ENCODE measurements at regions of chr11 and their contacts with region 1.

Region 1: GRCh38 chr11:131408025-131408640 is 37.7 kb downstream of the NTM start:
- DNase-seq: peak in 1 of 2 donors; percentile 50
- H3K4me3 ChIP-seq: no peak overlapping the region
- CTCF ChIP-seq: no peak
- POLR2A ChIP-seq: no peak

Region 2: DNA sequence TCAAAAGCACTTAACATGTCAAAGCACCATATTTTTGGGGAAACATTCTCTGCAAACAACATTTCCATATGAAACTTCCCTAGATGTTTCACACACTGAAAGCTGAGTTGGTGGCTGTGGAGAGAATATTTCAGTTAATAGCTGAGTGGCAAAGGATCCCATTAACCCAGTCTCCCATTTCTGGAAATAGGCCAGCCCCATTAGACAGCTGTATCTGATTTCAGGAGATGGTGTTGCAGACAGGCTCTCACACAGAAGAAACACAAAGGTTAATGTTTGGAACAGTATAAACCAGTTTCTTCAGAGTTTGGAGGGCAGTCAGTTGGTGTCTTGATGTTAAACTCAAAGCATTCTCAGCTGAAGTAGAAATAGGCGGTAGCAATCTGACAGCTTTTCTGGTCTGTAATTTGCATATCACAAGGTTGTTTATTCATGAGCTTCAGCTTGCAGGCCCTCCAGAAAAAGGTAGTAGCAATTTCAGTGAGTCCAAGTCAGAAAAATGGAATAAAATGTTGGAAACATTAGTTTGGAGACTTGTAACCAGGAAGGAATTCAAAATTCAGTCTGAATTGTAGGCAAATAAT is 1077.9 kb before region 1 on chr11:
- intact Hi-C with region 1: no loop called
- DNase-seq: no peak
- H3K4me3 ChIP-seq: no peak overlapping the region
- CTCF ChIP-seq: no peak
- POLR2A ChIP-seq: no peak

Region 3: GRCh38 chr11:131481303-131481702 is 73.2 kb after region 1 on chr11:
- intact Hi-C with region 1: no loop called
- DNase-seq: no peak
- H3K4me3 ChIP-seq: no peak overlapping the region
- CTCF ChIP-seq: no peak
- POLR2A ChIP-seq: no peak

Region 4: GRCh38 chr11:131511794-131512193 is 103.7 kb after region 1 on chr11:
- intact Hi-C with region 1: loop called (anchors 10 kb)
- DNase-seq: no peak
- H3K4me3 ChIP-seq: no peak overlapping the region
- CTCF ChIP-seq: no peak
- POLR2A ChIP-seq: no peak

Region 5: GRCh38 chr11:131910523-131911387 is 502.6 kb after region 1 on chr11:
- intact Hi-C with region 1: no loop called
- DNase-seq: no peak
- H3K4me3 ChIP-seq: no peak overlapping the region
- CTCF ChIP-seq: no peak
- POLR2A ChIP-seq: no peak

Measured in lower leg skin (tissue), 4 donors.